Testis (tissue), 5 donors: ENCODE measurements at regions of chr19 and their contacts with region 1.

Region 1: GRCh38 chr19:49983645-49984229 is 22.8 kb upstream of the SIGLEC11 start:
- DNase-seq: peak; percentile 82
- H3K4me3 ChIP-seq: no peak overlapping the region
- H3K27ac ChIP-seq: no peak overlapping the region
- H3K4me1 ChIP-seq: no peaks in the 10 kb centered on the region
- H3K27me3 ChIP-seq: no peaks in the 10 kb centered on the region
- CTCF ChIP-seq: peak; percentile 86 to 92 (median 91)
- POLR2A ChIP-seq: no peak

Region 2: DNA sequence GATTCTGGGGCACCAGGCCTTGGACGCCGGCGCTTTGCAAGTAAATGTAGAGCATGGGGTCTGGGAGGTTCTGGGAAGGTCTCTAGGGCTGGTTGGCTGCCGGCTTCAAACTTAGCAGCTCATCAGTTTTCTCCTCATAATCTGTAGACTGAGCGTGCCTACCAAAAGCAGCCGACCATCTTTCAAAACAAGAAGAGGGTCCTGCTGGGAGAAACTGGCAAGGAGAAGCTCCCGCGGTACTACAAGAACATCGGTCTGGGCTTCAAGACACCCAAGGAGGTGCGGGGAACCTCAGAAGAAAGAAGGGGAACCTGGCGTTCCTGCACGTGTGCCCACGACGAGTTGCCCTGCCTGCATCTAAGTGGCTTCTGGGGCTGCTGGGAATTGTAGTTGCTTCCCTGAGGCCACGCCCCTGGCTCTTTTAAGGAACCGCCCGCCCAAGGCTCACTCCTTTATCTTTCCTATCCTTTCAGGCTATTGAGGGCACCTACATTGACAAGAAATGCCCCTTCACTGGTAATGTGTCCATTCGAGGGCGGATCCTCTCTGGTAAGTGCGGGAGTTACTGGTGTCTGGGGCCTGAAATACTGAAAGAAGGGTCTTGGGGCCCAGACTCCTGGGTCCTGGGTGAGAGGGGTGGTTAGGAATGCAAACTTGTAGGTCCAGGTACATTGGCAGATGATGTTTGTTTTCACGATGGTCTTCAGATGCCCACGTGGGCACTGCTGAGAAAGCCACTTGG is 486.5 kb before region 1 on chr19:
- intact Hi-C with region 1: no loop called
- DNase-seq: peak; percentile 88
- H3K4me3 ChIP-seq: peak overlapping the region; percentile 94
- H3K27ac ChIP-seq: peak overlapping the region; percentile 98
- H3K4me1 ChIP-seq: peaks cover 33% of the 10 kb centered on the region
- H3K27me3 ChIP-seq: no peaks in the 10 kb centered on the region
- CTCF ChIP-seq: no peak
- POLR2A ChIP-seq: no peak

Region 3: DNA sequence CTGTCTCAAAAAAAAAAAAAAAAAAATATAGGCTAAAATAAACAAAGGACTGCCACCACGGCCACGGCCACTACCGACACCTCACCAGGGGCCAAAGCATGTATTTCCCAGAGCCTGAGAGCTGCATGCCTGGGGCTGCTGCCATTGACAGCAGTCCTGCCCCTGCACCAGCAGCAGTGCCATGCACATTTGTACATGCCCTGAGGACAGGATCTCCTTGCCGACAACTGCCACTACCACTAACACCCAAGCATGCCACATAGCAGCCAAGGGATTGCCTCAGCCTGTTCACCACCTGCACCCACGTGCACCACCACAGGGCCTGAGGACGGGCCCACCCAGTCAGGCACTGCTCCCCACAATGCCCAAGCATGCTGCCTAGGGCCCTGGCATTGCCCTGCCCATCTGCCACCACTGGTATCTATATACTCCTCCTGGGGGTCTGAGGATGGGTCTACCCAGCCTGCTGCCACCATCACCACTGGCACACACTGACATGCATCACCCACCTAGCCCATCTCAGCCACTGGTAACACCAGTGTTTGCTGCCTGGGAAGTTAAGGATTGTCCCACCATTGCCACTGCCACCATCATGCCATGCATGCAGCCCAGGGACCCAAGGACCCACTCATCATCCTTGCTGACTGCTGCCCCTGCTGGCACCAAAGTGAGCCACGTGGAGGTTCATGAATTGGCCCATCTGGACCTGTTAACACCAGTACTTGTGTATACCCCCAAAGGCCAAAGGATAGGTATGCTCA is 43.8 kb before region 1 on chr19:
- intact Hi-C with region 1: loop called (anchors 5 kb)
- DNase-seq: no peak
- H3K4me3 ChIP-seq: no peak overlapping the region
- H3K27ac ChIP-seq: no peak overlapping the region
- H3K4me1 ChIP-seq: peaks cover 7% of the 10 kb centered on the region
- H3K27me3 ChIP-seq: no peaks in the 10 kb centered on the region
- CTCF ChIP-seq: no peak
- POLR2A ChIP-seq: no peak

Region 4: DNA sequence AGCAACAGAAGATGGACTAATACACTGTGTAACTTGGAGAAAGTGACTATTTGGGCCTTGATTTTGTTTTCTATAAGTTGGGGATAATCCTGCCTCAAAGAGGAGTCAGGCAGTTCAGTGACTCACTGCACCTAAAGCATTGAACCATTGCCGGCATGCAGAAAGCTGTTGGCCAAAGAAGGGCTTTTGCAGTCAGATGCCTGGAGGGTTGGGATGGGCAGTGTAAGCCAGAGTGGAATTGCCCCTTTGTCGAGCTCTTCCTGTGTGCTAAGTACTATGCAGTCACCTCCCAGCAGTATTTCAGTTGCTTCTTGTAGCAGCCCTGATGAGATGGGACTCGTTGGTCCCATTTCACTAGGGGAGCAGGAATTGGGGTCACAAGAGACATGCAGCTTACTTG is 53.2 kb after region 1 on chr19:
- intact Hi-C with region 1: no loop called
- DNase-seq: no peak
- H3K4me3 ChIP-seq: no peak overlapping the region
- H3K27ac ChIP-seq: no peak overlapping the region
- H3K4me1 ChIP-seq: no peaks in the 10 kb centered on the region
- H3K27me3 ChIP-seq: no peaks in the 10 kb centered on the region
- CTCF ChIP-seq: no peak
- POLR2A ChIP-seq: no peak